Heart left ventricle (tissue), 16 donors: ENCODE measurements at regions of chr6 and their contacts with region 1.

Region 1: GRCh38 chr6:166862287-166862977 is 93.9 kb downstream of the RNASET2 start:
- DNase-seq: peak in 4 of 5 donors; percentile 31 to 69 (median 39)
- ATAC-seq: peak in 3 of 4 donors; percentile 60 to 79 (median 63)
- H3K4me3 ChIP-seq: peak overlapping the region; percentile 34 to 71 (median 62)
- H3K27ac ChIP-seq: peak overlapping the region in 8 of 12 donors; percentile 32 to 65 (median 54)
- H3K4me1 ChIP-seq: peaks cover 0 to 16% (median 6%) of the 10 kb centered on the region in 12 donors
- H3K27me3 ChIP-seq: peaks cover 0 to 46% (median 19%) of the 10 kb centered on the region in 9 donors
- CTCF ChIP-seq: peak in 4 of 12 donors; percentile 4 to 24 (median 13)
- POLR2A ChIP-seq: no peak

Region 2: DNA sequence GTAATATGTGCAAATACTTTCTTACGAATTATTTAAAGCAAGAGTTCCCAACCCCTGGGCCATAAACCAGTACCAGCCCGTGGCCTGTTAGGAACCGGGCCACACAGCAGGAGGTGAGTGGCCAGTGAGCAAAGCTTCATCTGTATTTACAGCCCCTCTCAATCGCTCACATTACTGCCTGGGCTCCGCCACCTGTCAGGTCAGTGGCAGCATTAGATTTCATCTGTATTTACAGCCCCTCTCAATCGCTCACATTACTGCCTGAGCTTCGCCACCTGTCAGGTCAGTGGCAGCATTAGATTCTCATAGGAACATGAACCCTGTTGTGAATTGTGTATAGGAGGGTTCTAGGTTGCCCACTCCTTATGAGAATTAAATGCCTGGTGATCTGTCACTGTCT is 48.0 kb before region 1 on chr6:
- intact Hi-C with region 1: no loop called
- DNase-seq: no peak
- ATAC-seq: no peak
- H3K4me3 ChIP-seq: no peak overlapping the region
- H3K27ac ChIP-seq: no peak overlapping the region
- H3K4me1 ChIP-seq: no peaks in the 10 kb centered on the region
- H3K27me3 ChIP-seq: no peaks in the 10 kb centered on the region
- CTCF ChIP-seq: no peak
- POLR2A ChIP-seq: no peak

Region 3: DNA sequence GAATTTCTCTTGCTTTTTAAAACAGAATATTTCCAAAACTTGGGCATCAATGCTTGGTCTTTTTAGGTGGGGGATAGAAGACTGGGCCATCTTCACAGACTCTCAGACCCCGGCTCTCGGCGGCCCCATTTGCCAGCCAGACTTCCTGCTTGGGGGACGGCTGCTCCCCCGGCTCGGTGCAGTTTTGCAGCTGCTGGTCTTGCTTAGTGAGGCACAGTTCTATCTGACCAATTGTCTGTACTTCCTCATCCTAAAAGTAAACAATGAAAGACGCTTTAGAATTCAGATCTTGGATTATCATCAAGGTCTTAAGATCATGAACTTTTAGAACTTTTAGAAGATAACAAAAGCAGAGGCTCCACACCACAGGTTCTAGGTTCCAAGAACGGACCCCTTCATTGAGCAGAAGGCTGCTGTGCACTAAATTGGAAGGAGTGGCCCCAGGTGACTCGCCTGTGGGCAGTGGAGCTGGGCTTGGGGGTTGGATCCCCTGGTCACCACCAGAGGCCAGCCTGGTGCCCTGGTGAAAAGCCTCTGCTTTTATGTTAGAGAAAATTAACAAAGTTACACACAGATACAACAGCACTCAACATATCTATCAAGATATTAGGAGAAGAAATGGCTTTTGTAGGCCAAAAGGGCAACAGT is 67.2 kb after region 1 on chr6:
- intact Hi-C with region 1: loop called in 1 of 10 experiments (anchors 10 kb)
- DNase-seq: no peak
- ATAC-seq: peak in 1 of 4 donors; percentile 29
- H3K4me3 ChIP-seq: peak overlapping the region in 1 of 12 donors; percentile 3
- H3K27ac ChIP-seq: peak overlapping the region in 8 of 12 donors; percentile 73 to 90 (median 81)
- H3K4me1 ChIP-seq: peaks cover 0 to 28% (median 8%) of the 10 kb centered on the region in 12 donors
- H3K27me3 ChIP-seq: no peaks in the 10 kb centered on the region
- CTCF ChIP-seq: peak in 2 of 12 donors; percentile 12 to 21
- POLR2A ChIP-seq: no peak

Region 4: GRCh38 chr6:166956444-166957086 is 94.1 kb after region 1 on chr6 and contains the start of gene RNASET2:
- intact Hi-C with region 1: loop called in 1 of 10 experiments (anchors 10 kb)
- DNase-seq: peak; percentile 97 to 100 (median 98)
- ATAC-seq: peak; percentile 98 to 99 (median 98)
- H3K4me3 ChIP-seq: peak within 1 kb of the TSS; percentile 61 to 98 (median 88)
- H3K27ac ChIP-seq: peak within 1 kb of the TSS; percentile 73 to 98 (median 84)
- H3K4me1 ChIP-seq: peaks cover 0 to 63% (median 12%) of the 10 kb centered on the region in 12 donors
- H3K27me3 ChIP-seq: no peaks in the 10 kb centered on the region
- CTCF ChIP-seq: peak in 1 of 12 donors; percentile 17
- POLR2A ChIP-seq: peak in 1 of 2 donors; percentile 83
- total RNA-seq, gene RNASET2: 7.9 to 76.0 (median 13.5) TPM